ENCODE measurements at regions of chr1 and their contacts with region 1.

Region 1: DNA sequence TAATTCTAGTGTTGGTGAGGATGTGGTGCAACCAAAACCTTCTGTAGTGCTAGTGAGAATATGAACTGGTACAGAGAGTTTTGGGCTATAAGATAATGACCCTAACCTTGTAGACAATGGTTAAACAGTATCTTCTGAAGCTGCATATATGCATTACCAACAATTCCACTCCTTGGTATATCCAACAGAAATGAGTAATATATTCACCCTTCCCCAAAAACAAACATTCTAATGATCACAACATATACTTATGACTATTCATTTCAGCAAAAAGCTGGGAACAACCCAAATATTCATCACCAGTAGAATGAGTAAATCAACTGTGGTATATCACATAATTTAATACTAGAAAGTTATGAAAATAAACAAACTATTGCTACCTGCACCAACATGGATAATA is 39.6 kb upstream of the DPYD start:
- DNase-seq: no peak
- CTCF ChIP-seq: no peak

Region 2: GRCh38 chr1:96815914-96816313 is 1144.6 kb before region 1 on chr1:
- CTCF ChIA-PET with region 1: no interaction called
- POLR2A ChIA-PET with region 1: interaction called, 11 read pairs
- DNase-seq: no peak
- CTCF ChIP-seq: no peak

Region 3: GRCh38 chr1:97976801-97977200 is 16.3 kb after region 1 on chr1:
- CTCF ChIA-PET with region 1: interaction called, 13 read pairs
- POLR2A ChIA-PET with region 1: no interaction called
- DNase-seq: no peak
- CTCF ChIP-seq: no peak